ENCODE measurements at regions of chr10 and their contacts with region 1.

Region 1: DNA sequence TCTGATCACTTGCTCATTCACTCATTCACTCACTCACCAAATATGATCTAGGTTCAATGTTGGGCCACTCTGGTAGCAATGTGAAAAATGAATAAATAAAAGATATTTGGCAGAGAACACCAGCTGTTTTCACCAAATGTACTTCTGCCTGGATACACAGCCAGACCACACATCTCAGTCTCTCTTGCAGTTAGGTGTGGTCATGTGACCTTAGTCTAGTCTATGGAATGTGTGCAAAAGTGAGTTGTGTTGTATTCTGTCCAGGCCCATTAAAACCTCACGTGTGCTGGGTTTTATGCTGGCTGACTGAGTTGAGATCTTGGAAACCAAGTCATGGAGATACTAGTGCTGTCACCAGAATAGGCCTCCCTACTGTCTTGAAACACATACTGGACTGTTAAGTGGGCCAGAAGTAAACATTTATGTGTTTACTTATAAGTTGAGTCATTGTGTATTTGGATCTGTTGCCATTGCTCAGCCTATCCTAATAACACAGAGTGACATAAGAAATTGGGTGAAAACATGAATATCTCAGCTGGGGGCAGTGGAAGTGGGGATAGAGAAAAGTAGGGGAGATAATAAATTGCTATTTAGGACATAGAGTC is 145.5 kb downstream of the PTEN start:
- DNase-seq: no peak
- ATAC-seq: no peak
- H3K4me3 ChIP-seq: no peak overlapping the region
- H3K27ac ChIP-seq: no peak overlapping the region
- H3K4me1 ChIP-seq: peaks cover 0 to 12% (median 0%) of the 10 kb centered on the region in 9 donors
- H3K27me3 ChIP-seq: no peaks in the 10 kb centered on the region
- CTCF ChIP-seq: no peak

Region 2: GRCh38 chr10:88095223-88095721 is 86.3 kb after region 1 on chr10:
- intact Hi-C with region 1: loop called in 1 of 10 experiments (anchors 5 kb)
- DNase-seq: no peak
- ATAC-seq: no peak
- H3K4me3 ChIP-seq: no peak overlapping the region
- H3K27ac ChIP-seq: no peak overlapping the region
- H3K4me1 ChIP-seq: peaks cover 0 to 38% (median 10%) of the 10 kb centered on the region in 9 donors
- H3K27me3 ChIP-seq: no peaks in the 10 kb centered on the region
- CTCF ChIP-seq: no peak

Measured in heart right ventricle (tissue), 16 donors.